Activated T-helper 1 cell treated with anti-CD3 and anti-CD28 coated beads, Interleukin-12 subunit alpha, Interleukin-12 subunit beta, Interleukin-2, Interleukin-4 antibody, amounts not matched to agents 30 ng/mL and 10 ng/mL and 1 ng/mL, durations not matched to agents 14 hours and 24 hours and 36 hours (primary cell): ENCODE measurements at regions of chr11 and their contacts with region 1.

Region 1: DNA sequence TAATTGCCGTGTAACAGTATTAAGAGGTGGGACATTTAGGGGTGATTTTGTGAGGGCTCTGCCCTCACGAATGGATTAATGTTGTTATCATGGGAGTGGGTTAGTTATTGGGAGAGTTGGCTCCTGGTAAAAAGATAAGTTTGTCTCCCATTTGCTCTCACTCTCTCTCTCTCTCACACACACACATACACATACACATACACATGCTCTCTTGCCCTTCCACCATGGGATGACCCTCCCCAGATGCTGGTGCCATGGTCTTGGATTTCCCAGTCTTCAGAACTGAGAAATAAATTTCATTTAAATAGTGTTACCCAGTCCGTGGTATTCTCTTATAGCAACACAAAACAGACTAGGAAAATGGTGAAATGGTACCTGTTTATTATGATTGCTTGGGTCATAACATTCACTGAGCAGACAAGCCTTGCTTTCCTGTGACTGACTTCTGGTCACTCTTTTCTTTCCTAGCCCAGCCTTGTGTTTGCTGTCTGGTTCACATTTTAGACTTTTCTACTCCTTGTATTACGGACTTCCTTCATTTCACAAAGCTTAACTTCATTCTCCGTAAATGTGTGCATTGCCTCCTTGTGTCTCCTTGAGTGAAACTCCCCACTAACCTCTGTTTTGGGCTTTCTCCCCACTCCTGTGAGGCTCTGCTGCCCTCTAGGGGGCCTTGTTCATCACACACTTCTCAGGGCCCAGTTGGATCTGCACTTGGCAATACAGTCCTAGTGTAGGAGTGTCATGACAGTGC is 206.5 kb upstream of the CTSC start:
- DNase-seq: peak; percentile 72
- H3K4me3 Mint-ChIP-seq: no peak overlapping the region
- H3K27ac Mint-ChIP-seq: peak overlapping the region; percentile 3
- H3K4me1 Mint-ChIP-seq: peaks cover 7% of the 10 kb centered on the region
- H3K27me3 Mint-ChIP-seq: peaks cover 10% of the 10 kb centered on the region

Region 2: DNA sequence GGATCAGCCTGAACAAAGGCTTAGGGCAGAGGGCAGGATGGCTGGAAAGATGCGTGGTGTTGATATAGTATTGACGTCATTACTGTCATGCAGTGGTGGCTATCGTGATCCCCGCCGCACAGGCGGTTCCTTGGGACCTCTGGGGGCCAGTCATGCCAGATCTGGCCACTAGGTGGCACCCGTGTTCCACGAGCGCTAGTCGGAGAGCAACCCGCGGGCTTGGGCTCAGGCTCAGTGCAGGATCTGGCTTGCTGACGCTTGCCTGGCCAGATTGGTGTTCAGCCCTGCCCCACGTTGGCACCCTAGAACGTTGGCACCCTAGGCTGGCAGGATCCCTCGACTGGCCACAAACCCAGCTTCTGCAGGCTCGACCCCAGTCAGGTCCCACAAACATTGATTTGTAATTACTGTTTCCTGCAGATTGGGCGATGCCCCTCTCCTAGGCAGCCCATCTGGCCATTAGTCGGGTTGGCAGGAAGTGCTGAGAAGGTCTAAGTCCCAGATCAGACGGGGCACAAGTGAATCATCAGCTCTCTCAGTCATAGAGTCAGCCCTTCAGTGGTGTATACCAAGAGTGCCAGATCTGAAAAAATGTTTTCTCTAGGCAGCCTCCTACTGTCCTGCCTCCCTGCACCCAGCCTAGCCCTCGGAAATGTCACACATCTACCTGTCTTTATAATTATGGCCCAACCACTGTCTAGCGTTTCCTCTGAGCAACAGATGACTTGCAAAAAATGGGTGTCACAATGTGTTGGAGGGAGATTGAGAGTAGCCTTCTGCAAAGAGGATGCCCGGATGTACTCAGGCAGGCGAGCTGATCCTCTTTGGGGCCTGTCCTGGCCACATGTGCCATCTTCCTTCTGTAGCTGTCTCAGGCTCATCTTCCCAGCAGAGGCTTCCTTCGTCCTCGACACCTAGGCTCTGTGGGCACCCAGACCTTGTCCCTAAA is 1191.0 kb before region 1 on chr11:
- intact Hi-C with region 1: loop called (anchors 1 kb)
- DNase-seq: peak; percentile 68
- H3K4me3 Mint-ChIP-seq: no peak overlapping the region
- H3K27ac Mint-ChIP-seq: no peak overlapping the region
- H3K4me1 Mint-ChIP-seq: peaks cover 14% of the 10 kb centered on the region
- H3K27me3 Mint-ChIP-seq: peaks cover 8% of the 10 kb centered on the region

Region 3: DNA sequence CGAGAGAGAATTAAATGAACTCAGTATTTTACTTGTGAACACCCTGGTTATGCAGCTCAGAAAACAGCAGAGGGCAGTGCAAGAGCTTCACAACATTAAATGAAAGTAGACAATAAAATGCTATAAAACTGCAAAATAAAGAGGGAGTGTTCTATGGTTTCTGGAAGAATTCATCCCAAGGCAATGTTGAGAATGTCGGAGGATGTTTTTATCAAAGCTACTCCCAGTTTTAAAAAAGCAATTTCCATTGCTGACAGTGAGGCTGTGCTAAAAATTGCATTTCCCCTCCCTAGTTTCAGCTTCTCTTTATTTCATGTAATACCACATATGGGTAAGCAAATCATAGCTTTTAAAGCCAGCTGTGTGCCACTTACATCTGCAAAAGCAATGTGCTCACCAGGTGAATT is 665.7 kb before region 1 on chr11:
- intact Hi-C with region 1: loop called (anchors 1 kb)
- DNase-seq: no peak
- H3K4me3 Mint-ChIP-seq: no peak overlapping the region
- H3K27ac Mint-ChIP-seq: no peak overlapping the region
- H3K4me1 Mint-ChIP-seq: no peaks in the 10 kb centered on the region
- H3K27me3 Mint-ChIP-seq: peaks cover 2% of the 10 kb centered on the region

Region 4: DNA sequence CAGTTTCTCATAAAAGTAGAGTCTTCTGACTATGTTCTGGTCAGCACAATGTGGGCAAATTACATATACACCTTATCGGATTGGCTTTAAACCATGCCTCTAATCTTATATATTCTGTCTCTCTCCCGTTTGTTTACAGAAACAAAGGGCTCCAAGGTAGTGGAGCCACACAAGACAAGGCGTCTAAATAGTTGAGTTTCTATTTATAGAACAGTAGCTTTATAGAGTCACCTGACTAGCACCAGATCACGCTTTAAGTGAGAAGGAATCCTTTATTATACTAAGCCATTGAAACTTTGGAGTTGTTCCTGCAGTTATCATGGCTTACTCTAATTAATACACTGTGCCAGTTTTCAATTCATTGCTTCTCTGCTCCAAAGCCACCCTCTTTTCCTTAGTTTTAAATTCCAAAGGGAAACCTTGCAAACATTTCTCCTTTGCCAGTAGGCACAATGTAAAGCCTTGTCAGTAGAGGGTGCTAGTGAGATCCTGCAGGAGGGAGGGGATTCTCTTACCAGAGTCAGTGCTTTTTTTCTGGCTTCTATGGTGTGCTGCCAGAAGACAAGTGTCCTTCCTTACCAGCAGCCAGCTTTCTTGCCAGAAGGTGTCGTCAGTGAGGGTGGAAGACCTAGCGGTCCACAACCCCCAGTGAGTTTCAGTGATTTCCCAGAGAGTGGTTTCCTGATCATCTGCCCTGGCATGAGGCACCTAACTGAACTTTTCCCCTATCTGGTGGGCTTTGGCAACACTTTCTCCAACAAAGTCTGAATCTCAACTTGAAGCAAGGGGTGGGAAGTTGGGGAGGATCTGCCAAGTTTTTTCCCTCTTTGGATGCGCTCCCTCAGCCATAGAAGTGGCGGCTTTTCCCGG is 440.5 kb before region 1 on chr11:
- intact Hi-C with region 1: loop called (anchors 1 kb)
- DNase-seq: peak; percentile 16
- H3K4me3 Mint-ChIP-seq: no peak overlapping the region
- H3K27ac Mint-ChIP-seq: no peak overlapping the region
- H3K4me1 Mint-ChIP-seq: no peaks in the 10 kb centered on the region
- H3K27me3 Mint-ChIP-seq: peaks cover 16% of the 10 kb centered on the region

Region 5: DNA sequence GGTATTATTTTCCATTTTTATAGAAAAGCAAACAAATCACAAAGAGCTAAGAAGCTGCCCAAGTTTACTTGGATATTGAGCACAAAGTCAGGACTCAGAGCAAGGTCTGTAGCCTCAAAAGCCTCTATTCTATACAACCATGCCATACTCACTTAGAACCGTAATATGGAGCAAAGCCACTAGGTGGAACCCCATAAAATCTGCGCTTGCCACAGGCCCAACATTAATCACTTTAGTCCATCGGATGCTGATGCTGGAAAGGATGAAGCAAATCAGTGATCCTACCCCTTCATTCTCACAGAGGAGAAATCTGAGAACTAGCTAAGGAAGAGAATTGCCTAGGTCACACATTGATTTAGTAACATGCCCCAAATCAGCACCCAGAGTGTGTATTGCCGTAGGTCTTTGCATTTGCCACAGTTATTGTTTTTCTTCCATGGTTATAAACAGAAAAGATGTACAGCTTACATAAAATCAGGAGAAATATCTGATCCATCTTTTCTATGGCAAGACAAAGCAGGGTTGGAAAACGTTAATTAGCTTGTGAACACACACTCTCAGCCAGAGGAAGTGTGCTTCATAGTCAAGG is 312.1 kb before region 1 on chr11:
- intact Hi-C with region 1: loop called (anchors 1 kb)
- DNase-seq: peak; percentile 1
- H3K4me3 Mint-ChIP-seq: no peak overlapping the region
- H3K27ac Mint-ChIP-seq: no peak overlapping the region
- H3K4me1 Mint-ChIP-seq: no peaks in the 10 kb centered on the region
- H3K27me3 Mint-ChIP-seq: peaks cover 2% of the 10 kb centered on the region

Region 6: GRCh38 chr11:88655196-88655595 is 111.1 kb after region 1 on chr11:
- intact Hi-C with region 1: no loop called
- DNase-seq: no peak
- H3K4me3 Mint-ChIP-seq: no peak overlapping the region
- H3K27ac Mint-ChIP-seq: no peak overlapping the region
- H3K4me1 Mint-ChIP-seq: peaks cover 6% of the 10 kb centered on the region
- H3K27me3 Mint-ChIP-seq: no peaks in the 10 kb centered on the region

Region 7: DNA sequence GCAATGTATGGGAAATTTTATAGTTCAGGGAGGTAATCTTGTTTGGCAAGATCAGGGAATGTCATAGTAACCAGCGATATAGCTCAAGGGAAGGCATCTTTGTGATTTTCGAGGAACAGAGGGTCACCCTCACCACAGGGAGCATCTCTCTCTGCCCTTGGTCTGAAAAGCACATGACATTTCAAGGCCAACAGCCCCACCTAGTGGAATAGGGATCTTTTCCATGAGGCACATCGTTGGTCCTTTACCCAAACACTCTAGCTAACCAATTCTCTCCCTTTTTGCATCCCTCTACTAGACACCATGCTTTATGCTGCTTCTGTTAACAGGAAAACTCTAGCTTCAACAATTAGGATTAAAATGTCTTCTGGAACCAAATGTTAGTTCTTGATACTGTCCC is 342.7 kb after region 1 on chr11:
- intact Hi-C with region 1: loop called (anchors 1 kb)
- DNase-seq: peak; percentile 8
- H3K4me3 Mint-ChIP-seq: no peak overlapping the region
- H3K27ac Mint-ChIP-seq: no peak overlapping the region
- H3K4me1 Mint-ChIP-seq: no peaks in the 10 kb centered on the region
- H3K27me3 Mint-ChIP-seq: no peaks in the 10 kb centered on the region